ENCODE measurements at regions of chr2 and their contacts with region 1.

Region 1: GRCh38 chr2:136207030-136207623 is 89.2 kb upstream of the CXCR4 start:
- H3K4me3 Mint-ChIP-seq: no peak overlapping the region
- H3K27ac Mint-ChIP-seq: peak overlapping the region; percentile 75
- H3K4me1 Mint-ChIP-seq: peaks cover 71% of the 10 kb centered on the region
- H3K27me3 Mint-ChIP-seq: no peaks in the 10 kb centered on the region

Region 2: GRCh38 chr2:136246086-136246669 is 39.1 kb after region 1 on chr2:
- intact Hi-C with region 1: loop called (anchors 5 kb)
- H3K4me3 Mint-ChIP-seq: peak overlapping the region; percentile 40
- H3K27ac Mint-ChIP-seq: peak overlapping the region; percentile 79
- H3K4me1 Mint-ChIP-seq: peaks cover 82% of the 10 kb centered on the region
- H3K27me3 Mint-ChIP-seq: peaks cover 1% of the 10 kb centered on the region

Measured in dendritic cell treated with granulocyte-macrophage colony-stimulating factor and Interleukin-4, amounts not matched to agents 40 ng/mL and 50 ng/mL, for 4 days (primary cell).